ENCODE measurements at regions of chr16 and their contacts with region 1.

Region 1: GRCh38 chr16:48365581-48366164 is 19.5 kb downstream of the SIAH1 start:
- DNase-seq: peak; percentile 89
- H3K4me3 ChIP-seq: peak overlapping the region; percentile 57 to 83 (median 70)
- H3K27ac ChIP-seq: peak overlapping the region; percentile 66
- H3K4me1 ChIP-seq: peaks cover 14% of the 10 kb centered on the region
- H3K27me3 ChIP-seq: no peaks in the 10 kb centered on the region
- CTCF ChIP-seq: peak in 1 of 2 donors; percentile 18
- POLR2A ChIP-seq: peak; percentile 50

Region 2: GRCh38 chr16:46973207-46973995 is 1392.3 kb before region 1 on chr16 and contains the start of gene DNAJA2:
- CTCF ChIA-PET with region 1: no interaction called
- POLR2A ChIA-PET with region 1: no interaction called
- dilution Hi-C with region 1: no loop called
- intact Hi-C with region 1: loop called (anchors 10 kb)
- DNase-seq: peak; percentile 91
- H3K4me3 ChIP-seq: peak within 1 kb of the TSS; percentile 76 to 94 (median 89)
- H3K27ac ChIP-seq: peak within 1 kb of the TSS; percentile 18
- H3K4me1 ChIP-seq: peaks cover 19% of the 10 kb centered on the region
- H3K27me3 ChIP-seq: no peaks in the 10 kb centered on the region
- CTCF ChIP-seq: no peak
- POLR2A ChIP-seq: peak; percentile 91
- total RNA-seq, gene DNAJA2: 57.5 and 61.4 TPM in 2 replicates

Region 3: DNA sequence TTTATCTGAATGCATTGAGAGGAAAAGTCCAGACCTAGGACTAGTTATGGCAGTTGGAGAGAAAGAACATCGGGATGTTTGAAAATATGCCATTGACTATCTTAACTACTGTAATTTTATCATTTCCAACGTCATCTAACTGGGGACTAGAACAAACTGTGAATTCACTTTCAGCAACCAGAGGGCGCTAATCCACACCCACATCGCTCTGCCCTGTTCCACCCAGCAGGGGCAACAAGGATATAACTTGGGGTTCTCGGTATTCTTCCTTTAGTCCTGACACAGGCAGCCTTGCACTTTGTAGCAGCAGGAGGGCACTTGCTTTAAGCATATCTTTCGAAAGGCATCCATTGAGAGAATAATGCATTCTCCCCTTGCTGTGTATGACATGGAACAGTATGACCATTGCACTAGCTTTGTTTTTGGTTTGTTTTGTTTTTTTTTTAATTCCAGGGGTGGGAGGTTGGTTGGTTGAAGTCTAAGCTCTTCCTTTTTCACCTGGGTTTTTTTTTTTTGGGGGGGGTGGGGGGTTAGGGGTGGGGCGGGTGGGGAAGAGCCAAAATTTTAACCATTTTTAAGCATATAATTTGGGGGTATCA is 12.0 kb before region 1 on chr16:
- CTCF ChIA-PET with region 1: interaction called, 39 read pairs
- POLR2A ChIA-PET with region 1: no interaction called
- dilution Hi-C with region 1: no loop called
- intact Hi-C with region 1: no loop called
- DNase-seq: peak; percentile 75
- H3K4me3 ChIP-seq: no peak overlapping the region
- H3K27ac ChIP-seq: no peak overlapping the region
- H3K4me1 ChIP-seq: no peaks in the 10 kb centered on the region
- H3K27me3 ChIP-seq: no peaks in the 10 kb centered on the region
- CTCF ChIP-seq: peak; percentile 83 to 88
- POLR2A ChIP-seq: no peak